Naive thymus-derived CD4-positive, alpha-beta T cell (primary cell): ENCODE measurements at regions of chr10 and their contacts with region 1.

Region 1: DNA sequence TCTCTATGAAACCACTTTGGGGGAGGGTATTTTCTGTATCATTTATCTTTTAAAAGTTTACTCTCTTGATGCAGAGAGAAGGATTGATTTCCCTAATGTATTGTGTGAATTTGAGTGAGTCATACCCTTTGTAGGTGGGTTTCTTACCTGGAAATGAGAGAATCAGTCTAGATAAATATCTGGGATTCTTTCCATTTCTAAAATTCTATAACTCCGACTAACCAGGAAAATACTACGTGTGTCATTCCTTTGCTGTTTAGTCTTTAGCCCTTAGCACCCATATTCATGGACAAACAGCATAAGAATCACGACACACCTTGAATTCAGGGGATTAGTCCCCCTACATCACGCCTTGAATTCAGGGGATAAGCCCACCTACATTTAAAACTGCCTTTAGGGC is 139.1 kb downstream of the GATA3 start:
- DNase-seq: no peak
- ATAC-seq: no peak
- H3K4me3 ChIP-seq: no peak overlapping the region
- H3K4me3 Mint-ChIP-seq: no peak overlapping the region
- H3K27ac ChIP-seq: no peak overlapping the region
- H3K27ac Mint-ChIP-seq: no peak overlapping the region
- H3K4me1 ChIP-seq: peaks cover 0 to 7% of the 10 kb centered on the region in 2 donors
- H3K4me1 Mint-ChIP-seq: peaks cover 10 to 15% (median 11%) of the 10 kb centered on the region in 7 donors
- H3K27me3 ChIP-seq: no peaks in the 10 kb centered on the region
- H3K27me3 Mint-ChIP-seq: peaks cover 0 to 9% (median 0%) of the 10 kb centered on the region in 5 donors

Region 2: GRCh38 chr10:8238986-8239385 is 45.4 kb after region 1 on chr10:
- CTCF ChIA-PET with region 1: no interaction called
- POLR2A ChIA-PET with region 1: no interaction called
- intact Hi-C with region 1: loop called in 1 of 2 experiments (anchors 5 kb)
- DNase-seq: peak in 1 of 9 donors; percentile 44
- ATAC-seq: peak; percentile 37
- H3K4me3 ChIP-seq: peak overlapping the region; percentile 9
- H3K4me3 Mint-ChIP-seq: peak overlapping the region; percentile 39 to 80 (median 56)
- H3K27ac ChIP-seq: no peak overlapping the region
- H3K27ac Mint-ChIP-seq: peak overlapping the region; percentile 7 to 70 (median 22)
- H3K4me1 ChIP-seq: peaks cover 23 to 28% of the 10 kb centered on the region in 2 donors
- H3K4me1 Mint-ChIP-seq: peaks cover 27 to 65% (median 47%) of the 10 kb centered on the region in 7 donors
- H3K27me3 ChIP-seq: no peaks in the 10 kb centered on the region
- H3K27me3 Mint-ChIP-seq: peaks cover 0 to 2% (median 0%) of the 10 kb centered on the region in 5 donors